ENCODE measurements at regions of chr17 and their contacts with region 1.

Region 1: DNA sequence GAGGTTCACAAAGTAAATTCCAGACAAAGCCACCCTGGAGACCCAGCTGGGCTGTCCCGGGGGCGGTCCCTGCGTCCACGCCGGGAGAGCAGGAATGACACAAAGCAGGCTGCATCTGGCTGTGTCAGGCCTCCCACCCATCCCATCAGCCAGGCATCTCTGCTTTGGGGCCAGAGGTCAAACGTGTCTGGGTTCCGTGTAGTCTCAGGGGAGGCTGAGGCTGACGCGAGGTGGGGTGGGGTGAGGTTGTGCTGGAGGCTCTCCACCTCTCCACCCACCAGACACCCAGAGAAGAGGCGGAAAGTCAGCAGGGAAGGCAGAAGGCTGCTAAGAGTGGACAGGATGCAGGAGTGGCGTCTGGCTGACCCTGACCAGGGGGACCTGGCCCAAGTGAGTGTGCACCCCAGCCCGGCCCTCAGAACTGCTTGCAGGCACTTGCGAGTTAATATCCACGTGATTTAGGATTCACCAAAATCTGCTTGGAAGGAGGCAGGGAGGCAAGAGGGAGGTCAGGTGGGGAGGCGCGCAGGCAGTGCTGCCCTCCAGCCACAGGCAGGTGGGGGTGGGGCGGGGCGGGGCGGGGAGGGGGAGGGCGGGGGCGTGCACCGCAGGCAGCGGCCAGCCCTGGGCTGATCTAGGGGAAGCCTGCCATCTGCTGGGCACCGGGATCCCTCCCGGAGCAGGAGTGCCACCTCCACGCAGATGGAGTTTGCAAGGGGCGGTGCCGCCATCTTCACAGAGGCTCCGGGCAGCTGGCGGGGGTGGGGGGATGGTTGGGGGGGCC is 44.3 kb downstream of the TBC1D16 start:
- DNase-seq: no peak
- H3K4me3 ChIP-seq: peak overlapping the region in 3 of 4 donors; percentile 33 to 64 (median 45)
- H3K27ac ChIP-seq: no peak overlapping the region
- H3K4me1 ChIP-seq: peaks cover 30 to 74% (median 30%) of the 10 kb centered on the region in 3 donors
- H3K27me3 ChIP-seq: peaks cover 0 to 18% (median 0%) of the 10 kb centered on the region in 4 donors
- CTCF ChIP-seq: peak in 4 of 6 experiments; percentile 32 to 74 (median 56)
- POLR2A ChIP-seq: no peak

Region 2: GRCh38 chr17:79504181-79504605 is 487.1 kb before region 1 on chr17:
- intact Hi-C with region 1: no loop called
- DNase-seq: no peak
- H3K4me3 ChIP-seq: no peak overlapping the region
- H3K27ac ChIP-seq: no peak overlapping the region
- H3K4me1 ChIP-seq: peaks cover 0 to 12% (median 3%) of the 10 kb centered on the region in 3 donors
- H3K27me3 ChIP-seq: peaks cover 0 to 55% (median 0%) of the 10 kb centered on the region in 4 donors
- CTCF ChIP-seq: no peak
- POLR2A ChIP-seq: no peak

Region 3: GRCh38 chr17:79741751-79742588 is 249.4 kb before region 1 on chr17:
- intact Hi-C with region 1: loop called (anchors 10 kb)
- DNase-seq: no peak
- H3K4me3 ChIP-seq: peak overlapping the region in 1 of 4 donors; percentile 37
- H3K27ac ChIP-seq: no peak overlapping the region
- H3K4me1 ChIP-seq: peaks cover 9 to 21% (median 13%) of the 10 kb centered on the region in 3 donors
- H3K27me3 ChIP-seq: peaks cover 5 to 97% (median 10%) of the 10 kb centered on the region in 4 donors
- CTCF ChIP-seq: peak; percentile 68 to 96 (median 88)
- POLR2A ChIP-seq: no peak

Region 4: DNA sequence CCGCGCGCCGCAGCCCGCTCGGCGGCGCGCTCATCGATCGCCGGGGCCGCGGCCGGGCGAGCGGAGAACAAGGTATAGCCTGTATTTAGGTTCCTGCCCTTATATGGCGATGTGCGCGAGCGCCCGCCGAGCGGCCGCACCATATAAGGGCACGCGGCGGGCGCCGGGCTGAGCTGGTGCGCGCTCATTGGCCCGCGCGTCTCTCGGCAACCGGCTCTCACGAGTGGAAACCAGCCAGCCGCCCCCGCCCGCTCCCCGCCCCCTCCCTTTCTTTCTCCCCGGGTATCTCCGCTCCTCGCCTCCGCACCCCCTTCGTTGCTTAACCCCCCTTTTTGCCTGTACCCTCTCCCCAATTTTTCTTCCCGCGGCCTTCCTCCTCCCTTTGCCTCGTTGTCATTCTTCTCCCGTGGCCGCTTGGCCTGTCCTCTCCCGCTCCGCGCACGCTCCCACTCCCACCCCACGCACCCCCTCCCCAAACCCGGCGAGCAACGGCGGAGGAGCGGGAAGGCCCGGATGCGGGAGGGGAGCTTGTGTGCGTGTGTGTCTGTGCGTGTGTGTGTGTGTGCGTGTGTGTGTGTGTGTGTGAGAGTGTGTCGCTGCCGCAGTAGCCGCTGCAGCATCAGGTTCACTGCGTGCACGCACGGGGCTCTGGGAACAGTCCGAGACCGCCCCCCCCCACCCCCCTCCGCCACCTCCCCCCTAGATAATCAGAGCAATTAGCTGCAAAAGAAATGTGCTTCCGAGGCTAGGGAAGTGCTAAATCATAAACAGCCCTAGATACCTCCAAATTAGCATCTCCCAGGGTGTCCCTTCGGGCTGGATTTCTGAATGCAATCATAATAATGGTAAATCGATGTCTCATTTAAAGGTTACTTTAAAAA is 181.0 kb before region 1 on chr17:
- intact Hi-C with region 1: no loop called
- DNase-seq: no peak
- H3K4me3 ChIP-seq: peak overlapping the region in 1 of 4 donors; percentile 42
- H3K27ac ChIP-seq: no peak overlapping the region
- H3K4me1 ChIP-seq: peaks cover 46 to 67% (median 62%) of the 10 kb centered on the region in 3 donors
- H3K27me3 ChIP-seq: peaks cover 52 to 100% (median 73%) of the 10 kb centered on the region in 4 donors
- CTCF ChIP-seq: no peak
- POLR2A ChIP-seq: no peak

Region 5: GRCh38 chr17:79839363-79840268 is 151.7 kb before region 1 on chr17 and contains the start of gene CBX4:
- intact Hi-C with region 1: loop called (anchors 10 kb)
- DNase-seq: peak; percentile 74
- H3K4me3 ChIP-seq: peak within 1 kb of the TSS; percentile 76 to 90 (median 88)
- H3K27ac ChIP-seq: peak within 1 kb of the TSS; percentile 95 to 99 (median 98)
- H3K4me1 ChIP-seq: peaks cover 71 to 90% (median 73%) of the 10 kb centered on the region in 3 donors
- H3K27me3 ChIP-seq: peaks cover 21 to 51% (median 35%) of the 10 kb centered on the region in 4 donors
- CTCF ChIP-seq: peak; percentile 47 to 95 (median 82)
- POLR2A ChIP-seq: peak in 2 of 4 donors; percentile 82 to 88
- total RNA-seq, gene CBX4: 9.0 to 26.3 (median 17.1) TPM

Region 6: GRCh38 chr17:80177986-80178590 is 186.8 kb after region 1 on chr17:
- intact Hi-C with region 1: no loop called
- DNase-seq: no peak
- H3K4me3 ChIP-seq: no peak overlapping the region
- H3K27ac ChIP-seq: no peak overlapping the region
- H3K4me1 ChIP-seq: peaks cover 0 to 10% (median 8%) of the 10 kb centered on the region in 3 donors
- H3K27me3 ChIP-seq: peaks cover 0 to 3% (median 0%) of the 10 kb centered on the region in 4 donors
- CTCF ChIP-seq: no peak
- POLR2A ChIP-seq: no peak

Measured in esophagus squamous epithelium (tissue), 5 donors.